CD4-positive, alpha-beta T cell (primary cell): ENCODE measurements at regions of chr3 and their contacts with region 1.

Region 1: DNA sequence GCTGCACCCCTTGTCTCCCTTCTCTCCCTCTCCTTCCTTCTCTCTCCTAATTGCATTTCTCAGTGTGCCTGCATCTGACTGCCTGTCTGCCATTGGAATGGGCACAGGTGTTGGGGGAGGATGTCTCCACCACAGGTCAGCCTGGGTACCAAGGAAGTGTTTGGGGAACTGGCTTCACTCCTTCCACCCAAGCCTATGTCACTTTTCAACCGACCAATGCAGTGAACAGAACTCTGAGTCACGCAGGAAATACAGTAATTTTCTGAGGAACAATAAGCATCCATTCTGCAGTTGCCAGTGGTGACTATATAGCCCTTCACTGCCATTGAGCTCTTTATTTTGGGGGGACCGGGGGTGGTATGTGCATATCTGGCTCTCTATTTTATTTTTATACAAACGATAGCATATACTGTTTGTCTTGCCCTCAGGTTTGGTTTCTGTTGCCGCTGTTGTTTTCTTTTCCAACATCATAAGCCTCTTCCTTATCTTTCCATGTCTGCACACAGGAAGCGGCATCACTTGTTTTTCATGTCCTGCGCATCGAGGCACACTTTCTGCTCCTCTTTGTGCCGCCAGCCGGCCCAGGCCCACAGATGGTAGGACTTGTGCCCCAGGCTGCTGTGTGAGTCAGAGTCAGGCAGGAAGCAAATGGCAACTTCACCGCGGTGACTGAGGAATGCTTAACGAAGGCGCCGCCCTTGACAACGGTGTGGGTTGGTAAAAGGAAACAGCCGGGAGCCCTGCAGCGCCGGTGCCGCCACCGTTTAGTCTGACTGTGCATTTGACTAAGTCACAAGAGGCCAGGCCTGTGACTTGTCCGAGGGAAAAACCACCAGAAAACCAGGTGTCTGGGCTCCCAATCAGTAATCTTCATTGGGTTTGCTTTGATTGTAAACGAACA is 21.1 kb upstream of the CDCP1 start:
- DNase-seq: peak; percentile 70 to 91 (median 82)
- ATAC-seq: peak; percentile 98
- H3K4me3 ChIP-seq: peak overlapping the region; percentile 12
- H3K4me3 Mint-ChIP-seq: peak overlapping the region; percentile 62
- H3K27ac ChIP-seq: peak overlapping the region; percentile 36 to 61
- H3K27ac Mint-ChIP-seq: peak overlapping the region; percentile 81
- H3K4me1 ChIP-seq: peaks cover 18% of the 10 kb centered on the region
- H3K4me1 Mint-ChIP-seq: peaks cover 28% of the 10 kb centered on the region
- H3K27me3 ChIP-seq: no peaks in the 10 kb centered on the region
- H3K27me3 Mint-ChIP-seq: no peaks in the 10 kb centered on the region
- CTCF ChIP-seq: no peak

Region 2: DNA sequence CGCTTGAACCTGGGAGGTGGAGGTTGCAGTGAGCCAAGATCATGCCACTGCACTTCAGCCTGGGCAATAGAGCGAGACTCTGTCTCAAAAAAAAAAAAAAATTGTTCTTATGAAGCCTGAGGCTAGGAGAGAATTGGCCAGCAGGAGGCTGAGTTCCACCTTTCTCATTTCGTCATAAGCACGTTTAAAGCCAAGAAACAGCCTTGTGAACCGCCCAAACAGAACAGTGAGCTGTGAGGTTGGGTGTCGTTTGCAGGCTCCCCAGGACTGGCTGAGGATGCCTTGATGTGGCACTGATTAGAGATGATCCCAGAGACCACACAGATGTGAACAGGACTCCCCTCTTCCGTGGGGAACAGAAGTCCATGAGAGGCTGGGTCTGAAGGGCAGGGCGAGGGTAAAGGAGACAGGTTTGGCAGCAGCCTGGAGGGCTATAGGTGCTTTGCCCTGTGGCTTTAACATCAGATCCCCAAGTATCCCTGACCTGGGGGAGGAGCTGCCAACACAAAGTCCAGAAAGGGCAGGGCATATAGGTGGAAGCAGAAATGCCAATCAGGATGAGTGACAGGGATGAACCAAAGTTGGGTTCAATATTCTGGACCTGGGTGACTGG is 88.2 kb before region 1 on chr3:
- CTCF ChIA-PET with region 1: no interaction called
- POLR2A ChIA-PET with region 1: no interaction called
- intact Hi-C with region 1: loop called in 1 of 2 experiments (anchors 1 kb)
- DNase-seq: peak in 4 of 14 experiments; percentile 12 to 43 (median 29)
- ATAC-seq: peak; percentile 62
- H3K4me3 ChIP-seq: no peak overlapping the region
- H3K4me3 Mint-ChIP-seq: peak overlapping the region; percentile 48
- H3K27ac ChIP-seq: no peak overlapping the region
- H3K27ac Mint-ChIP-seq: no peak overlapping the region
- H3K4me1 ChIP-seq: no peaks in the 10 kb centered on the region
- H3K4me1 Mint-ChIP-seq: peaks cover 17% of the 10 kb centered on the region
- H3K27me3 ChIP-seq: peaks cover 0 to 2% of the 10 kb centered on the region in 2 experiments
- H3K27me3 Mint-ChIP-seq: peaks cover 7% of the 10 kb centered on the region
- CTCF ChIP-seq: peak; percentile 29

Region 3: GRCh38 chr3:45105855-45106671 is 61.2 kb before region 1 on chr3:
- CTCF ChIA-PET with region 1: no interaction called
- POLR2A ChIA-PET with region 1: no interaction called
- intact Hi-C with region 1: loop called in 1 of 2 experiments (anchors 2 kb)
- DNase-seq: peak; percentile 20 to 78 (median 52)
- ATAC-seq: peak; percentile 67
- H3K4me3 ChIP-seq: no peak overlapping the region
- H3K4me3 Mint-ChIP-seq: peak overlapping the region; percentile 47
- H3K27ac ChIP-seq: no peak overlapping the region
- H3K27ac Mint-ChIP-seq: peak overlapping the region; percentile 59
- H3K4me1 ChIP-seq: peaks cover 65% of the 10 kb centered on the region
- H3K4me1 Mint-ChIP-seq: peaks cover 78% of the 10 kb centered on the region
- H3K27me3 ChIP-seq: peaks cover 0 to 3% of the 10 kb centered on the region in 2 experiments
- H3K27me3 Mint-ChIP-seq: peaks cover 9% of the 10 kb centered on the region
- CTCF ChIP-seq: no peak

Region 4: DNA sequence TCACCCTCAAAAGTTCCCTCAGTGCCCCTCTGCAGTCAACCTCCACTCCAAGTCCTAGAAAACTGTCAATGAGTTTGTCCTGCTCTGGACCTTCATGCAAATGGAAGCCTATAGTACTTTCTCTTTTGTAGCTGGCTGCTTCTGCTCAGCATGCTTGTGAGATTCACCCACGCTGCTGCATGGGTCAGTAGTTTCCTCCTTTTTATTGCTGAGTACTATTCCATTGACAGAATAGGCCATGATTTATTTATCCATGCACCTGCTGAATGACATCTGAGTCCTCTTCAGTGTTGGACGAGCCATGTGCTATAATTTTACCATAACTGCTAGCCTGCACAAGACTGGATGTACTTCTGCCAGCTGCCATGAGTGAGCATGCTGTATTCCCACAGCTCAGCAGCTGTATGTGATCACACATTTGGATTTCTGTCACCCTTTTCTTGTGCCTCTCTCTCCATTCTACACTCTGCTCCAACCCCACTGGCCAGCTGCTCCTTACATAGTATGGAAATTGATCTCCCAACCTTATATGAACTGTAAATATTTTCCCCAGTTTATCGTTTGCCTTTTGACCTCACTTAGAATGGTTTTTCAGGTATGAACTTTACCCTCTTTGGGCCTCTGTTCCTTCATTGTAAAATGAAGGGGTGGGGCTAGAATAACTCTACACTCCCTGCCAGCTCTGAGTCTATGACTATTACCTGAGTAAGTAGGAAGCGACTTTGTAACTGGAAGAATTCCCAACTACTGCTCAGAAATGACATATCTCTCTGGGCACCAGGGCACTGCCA is 47.2 kb before region 1 on chr3:
- CTCF ChIA-PET with region 1: no interaction called
- POLR2A ChIA-PET with region 1: interaction called, 3 read pairs
- intact Hi-C with region 1: loop called in 1 of 2 experiments (anchors 5 kb)
- DNase-seq: no peak
- ATAC-seq: no peak
- H3K4me3 ChIP-seq: no peak overlapping the region
- H3K4me3 Mint-ChIP-seq: no peak overlapping the region
- H3K27ac ChIP-seq: no peak overlapping the region
- H3K27ac Mint-ChIP-seq: no peak overlapping the region
- H3K4me1 ChIP-seq: peaks cover 21% of the 10 kb centered on the region
- H3K4me1 Mint-ChIP-seq: peaks cover 31% of the 10 kb centered on the region
- H3K27me3 ChIP-seq: no peaks in the 10 kb centered on the region
- H3K27me3 Mint-ChIP-seq: no peaks in the 10 kb centered on the region
- CTCF ChIP-seq: no peak

Region 5: GRCh38 chr3:45205126-45205525 is 37.9 kb after region 1 on chr3:
- CTCF ChIA-PET with region 1: interaction called, 4 read pairs
- POLR2A ChIA-PET with region 1: interaction called, 3 read pairs
- intact Hi-C with region 1: loop called in 1 of 2 experiments (anchors 5 kb)
- DNase-seq: no peak
- ATAC-seq: no peak
- H3K4me3 ChIP-seq: no peak overlapping the region
- H3K4me3 Mint-ChIP-seq: no peak overlapping the region
- H3K27ac ChIP-seq: no peak overlapping the region
- H3K27ac Mint-ChIP-seq: no peak overlapping the region
- H3K4me1 ChIP-seq: peaks cover 11% of the 10 kb centered on the region
- H3K4me1 Mint-ChIP-seq: peaks cover 15% of the 10 kb centered on the region
- H3K27me3 ChIP-seq: no peaks in the 10 kb centered on the region
- H3K27me3 Mint-ChIP-seq: no peaks in the 10 kb centered on the region
- CTCF ChIP-seq: no peak